Left cardiac atrium (tissue), 4 donors: ENCODE measurements at regions of chr3 and their contacts with region 1.

Region 1: DNA sequence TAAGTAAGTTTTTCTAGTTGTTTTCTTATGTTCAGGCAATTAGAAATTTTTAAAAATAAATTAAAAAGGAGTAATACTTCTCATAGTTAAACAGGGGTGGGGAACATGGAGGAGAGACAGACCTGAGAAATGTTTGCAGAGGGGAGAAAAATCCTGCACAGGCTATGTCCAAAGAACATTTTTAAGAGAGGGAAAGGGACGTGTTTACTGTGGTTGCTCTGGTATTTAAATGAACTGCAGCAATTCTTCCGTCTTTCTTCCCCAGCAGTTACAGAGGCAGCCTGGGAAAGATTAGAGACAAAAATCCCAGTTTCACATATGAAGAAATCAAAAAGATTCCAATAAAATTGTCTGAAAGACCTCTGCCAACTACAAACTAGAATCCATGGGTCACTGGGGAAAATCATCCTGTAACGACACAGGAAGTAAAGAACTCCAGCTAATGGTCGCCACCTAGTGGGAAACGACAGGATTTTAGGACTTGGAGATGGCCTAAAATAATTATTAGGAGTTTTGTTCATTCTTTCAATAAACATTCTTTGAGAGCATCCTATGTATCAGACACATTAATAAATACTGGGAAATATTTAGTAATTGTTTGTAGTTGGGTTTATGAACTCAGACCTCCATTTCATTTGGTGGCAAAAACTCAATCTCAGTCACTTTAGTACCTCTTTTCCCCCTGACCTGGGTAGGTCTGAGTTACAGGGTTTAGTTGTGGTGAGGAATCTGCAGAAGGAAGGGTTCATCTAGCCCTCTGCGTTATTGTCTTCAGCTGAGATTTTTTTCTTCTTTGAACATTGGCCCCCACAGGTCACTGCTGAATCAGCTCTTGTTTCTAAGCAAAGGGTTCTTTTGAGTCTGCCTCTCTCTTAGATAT is 69.9 kb upstream of the GOLIM4 start:
- DNase-seq: peak; percentile 38
- ATAC-seq: peak; percentile 68 to 83

Region 2: DNA sequence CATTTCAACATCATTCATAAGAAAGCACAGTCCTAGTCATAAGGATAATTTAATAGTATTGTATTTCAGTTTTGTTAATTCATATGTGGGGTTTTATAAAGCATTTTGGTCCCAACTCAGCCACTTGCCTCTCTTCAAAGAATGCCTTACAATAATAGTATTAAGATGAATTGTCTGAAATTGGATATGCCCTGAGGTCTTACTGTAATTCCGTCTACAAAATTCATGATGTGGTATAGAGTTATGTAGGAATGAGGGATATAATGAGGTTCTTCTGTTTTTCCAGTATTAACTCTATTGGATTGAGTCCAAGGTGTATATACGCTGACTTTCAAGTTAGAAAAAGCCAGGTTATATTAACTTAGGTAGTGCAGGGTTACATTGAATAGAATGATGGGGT is 246.9 kb before region 1 on chr3:
- intact Hi-C with region 1: loop called in 1 of 2 experiments (anchors 5 kb)
- DNase-seq: no peak
- ATAC-seq: no peak

Region 3: GRCh38 chr3:167929968-167930367 is 235.7 kb before region 1 on chr3:
- intact Hi-C with region 1: loop called in 1 of 2 experiments (anchors 5 kb)
- DNase-seq: no peak
- ATAC-seq: peak; percentile 55 to 56

Region 4: GRCh38 chr3:168047190-168047795 is 118.3 kb before region 1 on chr3:
- intact Hi-C with region 1: loop called (anchors 2 kb)
- DNase-seq: no peak
- ATAC-seq: peak; percentile 63 to 76

Region 5: DNA sequence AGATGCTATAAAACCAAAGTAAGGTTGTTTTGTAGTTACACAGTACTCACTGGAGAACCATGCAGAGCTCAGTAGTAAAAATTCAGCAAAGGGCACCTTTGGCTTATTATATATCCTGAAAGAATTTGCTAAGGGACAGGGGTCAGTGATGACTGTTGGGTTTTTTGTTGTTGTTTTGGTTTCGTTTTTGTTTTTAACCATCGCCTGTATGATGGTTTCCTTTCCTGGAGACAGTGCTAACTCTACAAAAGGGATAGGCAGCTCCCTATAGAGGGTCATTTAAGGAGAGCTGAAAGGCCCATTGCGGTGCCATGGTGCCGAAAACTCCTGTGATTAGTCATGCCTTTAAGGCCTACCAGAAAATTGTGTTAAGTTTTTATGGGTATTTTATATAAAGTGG is 48.3 kb after region 1 on chr3:
- intact Hi-C with region 1: no loop called
- DNase-seq: no peak
- ATAC-seq: no peak

Region 6: GRCh38 chr3:169112153-169112892 is 946.7 kb after region 1 on chr3:
- intact Hi-C with region 1: no loop called
- DNase-seq: no peak
- ATAC-seq: no peak